Sigmoid colon (tissue), 7 donors: ENCODE measurements at regions of chr12 and their contacts with region 1.

Region 1: DNA sequence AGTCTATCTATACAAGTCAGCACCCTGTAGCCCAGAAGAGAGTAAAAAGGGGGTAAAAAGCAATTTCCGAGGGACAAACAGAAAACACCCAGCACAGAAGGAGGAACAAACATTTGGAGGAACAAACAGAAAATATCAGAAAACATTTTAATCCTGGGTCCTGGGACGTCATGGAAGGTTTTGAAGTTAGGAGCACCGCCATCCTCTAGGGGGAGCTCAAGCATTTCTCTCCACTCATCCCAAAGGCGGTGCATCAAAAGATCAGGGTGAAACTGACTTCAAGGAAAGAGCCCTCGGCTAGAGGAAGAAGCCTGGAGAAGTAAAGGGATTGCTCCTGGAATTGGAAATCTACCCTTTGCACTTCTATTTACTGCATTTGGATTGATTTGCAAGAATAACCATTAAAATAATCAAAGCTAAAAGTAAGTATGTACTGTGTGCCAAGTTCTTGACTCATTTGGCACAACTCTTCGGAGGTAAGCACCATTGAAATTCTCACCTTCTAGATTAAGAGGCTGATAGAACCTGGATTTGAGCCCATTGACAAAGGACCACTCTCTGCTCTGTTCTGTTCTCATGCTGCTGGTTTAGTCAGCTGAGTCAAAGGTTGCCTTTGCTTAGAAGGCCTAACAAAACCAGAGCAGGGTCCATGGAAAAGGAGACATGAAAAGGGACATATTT is 17.2 kb upstream of the POC1B start:
- DNase-seq: peak; percentile 75
- H3K4me3 ChIP-seq: no peak overlapping the region
- H3K27ac ChIP-seq: no peak overlapping the region
- H3K4me1 ChIP-seq: peaks cover 0 to 18% (median 6%) of the 10 kb centered on the region in 4 donors
- H3K27me3 ChIP-seq: no peaks in the 10 kb centered on the region
- CTCF ChIP-seq: peak; percentile 70 to 84 (median 80)
- EP300 ChIP-seq: no peak
- POLR2A ChIP-seq: no peak

Region 2: GRCh38 chr12:89566630-89567151 is 23.6 kb after region 1 on chr12:
- intact Hi-C with region 1: no loop called
- DNase-seq: no peak
- H3K4me3 ChIP-seq: no peak overlapping the region
- H3K27ac ChIP-seq: no peak overlapping the region
- H3K4me1 ChIP-seq: no peaks in the 10 kb centered on the region
- H3K27me3 ChIP-seq: no peaks in the 10 kb centered on the region
- CTCF ChIP-seq: no peak
- EP300 ChIP-seq: no peak
- POLR2A ChIP-seq: no peak

Region 3: DNA sequence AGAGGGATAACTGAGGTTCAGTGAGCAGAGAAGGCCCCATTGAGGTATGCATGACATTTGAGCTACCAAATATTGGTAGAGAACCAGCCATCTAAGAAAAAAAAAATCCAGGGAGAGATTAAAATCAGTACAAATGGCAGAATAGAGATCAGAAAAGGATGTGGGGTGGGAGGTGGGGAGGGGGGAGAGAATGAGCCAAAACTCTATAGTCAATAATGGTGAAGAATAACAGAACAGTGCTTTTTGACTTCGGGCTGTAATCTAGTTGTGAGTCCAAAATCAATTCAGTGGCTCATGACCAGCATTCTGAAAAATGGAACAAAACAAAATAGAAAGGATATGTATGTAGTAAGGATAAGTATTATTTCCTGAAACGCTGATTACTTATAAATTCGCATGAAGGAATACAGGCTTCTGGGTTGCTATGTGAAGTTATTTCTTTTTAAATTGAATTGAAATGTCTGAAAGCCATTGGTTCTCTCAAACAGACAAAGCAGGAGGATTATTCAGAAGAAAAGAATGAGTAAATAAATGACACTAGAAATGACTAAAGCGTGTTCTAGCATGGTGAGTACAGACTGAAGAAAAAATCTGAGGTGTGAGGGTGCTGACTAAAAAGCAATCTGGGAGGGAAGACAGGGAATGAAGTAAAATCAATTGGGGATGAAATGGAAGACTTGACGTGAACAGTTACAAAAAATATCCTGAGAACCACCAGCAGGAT is 93.2 kb after region 1 on chr12:
- intact Hi-C with region 1: no loop called
- DNase-seq: no peak
- H3K4me3 ChIP-seq: no peak overlapping the region
- H3K27ac ChIP-seq: no peak overlapping the region
- H3K4me1 ChIP-seq: peaks cover 0 to 11% (median 5%) of the 10 kb centered on the region in 4 donors
- H3K27me3 ChIP-seq: no peaks in the 10 kb centered on the region
- CTCF ChIP-seq: no peak
- EP300 ChIP-seq: no peak
- POLR2A ChIP-seq: no peak

Region 4: DNA sequence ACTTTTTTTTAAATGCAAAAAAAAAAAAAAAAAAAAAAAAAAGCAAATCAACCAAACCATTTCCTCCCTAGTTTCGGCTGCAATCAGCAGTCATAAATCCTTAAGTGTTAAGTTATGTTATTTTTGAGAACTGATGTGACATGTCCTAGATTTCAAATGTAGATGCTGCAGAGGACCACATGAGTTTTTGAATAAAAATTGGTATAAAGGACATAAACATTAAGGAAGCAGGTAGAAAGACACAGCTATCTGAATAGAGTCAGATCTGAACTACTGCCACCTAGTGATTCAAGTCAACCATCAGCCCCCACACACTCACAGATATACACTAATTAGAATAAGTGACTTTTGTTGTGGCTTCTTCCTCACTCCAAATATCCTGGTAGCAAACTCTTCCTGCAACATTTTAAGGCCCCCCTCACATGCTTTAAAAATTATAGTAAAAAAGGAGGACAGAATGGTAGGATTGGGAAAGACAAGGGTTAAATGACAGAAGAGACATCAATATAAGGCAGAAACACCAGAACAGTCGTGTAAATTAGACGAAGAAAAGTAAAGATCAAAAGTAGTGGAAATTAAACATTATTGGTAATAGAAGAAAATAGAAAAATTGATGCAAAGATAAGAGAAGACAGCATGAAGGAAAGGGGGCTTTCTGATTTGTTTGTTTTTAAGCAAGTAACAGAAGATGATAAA is 560.1 kb after region 1 on chr12:
- intact Hi-C with region 1: loop called (anchors 10 kb)
- DNase-seq: no peak
- H3K4me3 ChIP-seq: no peak overlapping the region
- H3K27ac ChIP-seq: no peak overlapping the region
- H3K4me1 ChIP-seq: no peaks in the 10 kb centered on the region
- H3K27me3 ChIP-seq: no peaks in the 10 kb centered on the region
- CTCF ChIP-seq: peak in 3 of 4 experiments; percentile 24 to 35 (median 28)
- EP300 ChIP-seq: no peak
- POLR2A ChIP-seq: no peak

Region 5: DNA sequence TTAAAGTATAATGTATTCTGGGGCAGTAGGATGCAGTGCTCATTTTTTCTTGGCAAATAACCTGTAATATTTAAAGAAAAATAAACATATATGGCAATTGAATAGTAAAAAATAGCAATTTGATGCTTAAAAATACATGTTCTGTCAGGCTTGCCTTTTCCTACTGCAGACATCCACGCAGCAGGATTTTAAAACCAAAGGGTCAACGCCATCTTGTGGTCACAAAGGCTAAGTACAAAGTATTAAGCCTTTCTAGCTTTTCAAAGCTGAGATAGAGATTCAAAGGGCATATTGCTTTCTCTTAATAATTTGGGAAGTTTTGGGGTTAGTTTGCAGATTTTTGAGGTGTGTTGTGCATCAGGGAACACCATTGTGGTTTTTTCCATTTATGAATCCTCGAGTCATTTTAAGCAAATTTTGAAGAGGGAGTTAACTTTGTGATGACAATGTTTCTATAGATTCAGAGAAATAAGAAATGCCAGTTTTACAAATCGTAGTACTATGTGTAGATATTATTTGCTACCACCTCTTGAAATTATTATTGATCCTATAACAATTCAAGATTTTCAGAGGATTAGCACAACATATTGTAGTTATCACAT is 1416.6 kb after region 1 on chr12:
- intact Hi-C with region 1: loop called (anchors 2 kb)
- DNase-seq: no peak
- H3K4me3 ChIP-seq: no peak overlapping the region
- H3K27ac ChIP-seq: no peak overlapping the region
- H3K4me1 ChIP-seq: no peaks in the 10 kb centered on the region
- H3K27me3 ChIP-seq: no peaks in the 10 kb centered on the region
- CTCF ChIP-seq: peak in 3 of 4 experiments; percentile 39 to 68 (median 66)
- EP300 ChIP-seq: no peak
- POLR2A ChIP-seq: no peak